ENCODE measurements at regions of chr16 and their contacts with region 1.

Region 1: DNA sequence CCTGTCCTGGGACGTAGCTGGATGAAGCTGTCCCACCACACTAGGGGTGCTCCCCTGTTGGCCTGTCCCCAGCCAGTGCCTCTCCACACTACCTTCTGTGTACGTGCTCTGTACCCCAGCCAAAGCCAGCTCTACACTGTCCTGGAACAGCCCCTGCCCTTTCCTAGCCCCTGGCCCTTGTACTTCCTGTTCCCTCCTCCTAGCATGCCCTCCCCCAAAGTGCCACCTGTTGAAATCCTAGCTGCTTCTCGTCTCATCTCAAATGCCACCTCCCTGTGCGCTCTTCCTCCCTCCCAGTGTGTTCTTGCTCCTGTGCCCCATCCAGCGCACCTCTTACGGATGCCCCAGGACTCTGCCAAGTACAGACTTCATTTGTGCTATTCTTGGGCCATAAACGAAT is 33.5 kb downstream of the IRX3 start:
- DNase-seq: no peak
- ATAC-seq: no peak
- H3K4me3 ChIP-seq: no peak overlapping the region
- H3K4me3 Mint-ChIP-seq: no peak overlapping the region
- H3K27ac ChIP-seq: no peak overlapping the region
- H3K27ac Mint-ChIP-seq: no peak overlapping the region
- H3K4me1 ChIP-seq: no peaks in the 10 kb centered on the region
- H3K4me1 Mint-ChIP-seq: no peaks in the 10 kb centered on the region
- H3K27me3 ChIP-seq: no peaks in the 10 kb centered on the region
- H3K27me3 Mint-ChIP-seq: peaks cover 3% of the 10 kb centered on the region
- CTCF ChIP-seq: no peak

Region 2: DNA sequence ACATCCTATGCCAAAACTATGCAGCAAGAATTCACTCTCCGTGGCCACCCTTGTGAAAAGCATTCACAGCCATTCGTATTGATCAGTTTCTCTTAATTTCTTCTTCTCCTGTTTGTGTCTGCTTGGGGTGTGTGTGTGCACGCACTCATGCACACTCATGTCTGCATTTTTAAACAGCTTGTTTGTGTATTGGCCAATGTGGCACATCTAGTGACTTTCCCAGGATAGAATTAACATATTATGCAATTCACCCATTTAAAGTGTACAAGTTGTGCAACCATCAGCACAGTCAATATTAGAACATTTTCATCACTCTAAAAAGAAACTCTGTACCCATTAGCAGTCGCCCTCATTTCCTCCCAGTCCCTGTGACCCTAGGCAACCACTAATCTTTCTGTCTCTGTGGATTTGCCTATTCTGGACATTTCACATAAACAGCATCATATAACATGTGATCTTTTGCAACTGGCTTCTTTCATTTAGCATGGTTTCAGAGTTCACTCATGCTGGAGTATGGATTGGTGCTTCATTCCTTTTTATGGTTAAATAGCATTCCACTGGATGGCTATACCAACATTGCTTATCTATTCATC is 13.3 kb after region 1 on chr16:
- CTCF ChIA-PET with region 1: no interaction called
- POLR2A ChIA-PET with region 1: no interaction called
- intact Hi-C with region 1: loop called in 1 of 2 experiments (anchors 1 kb)
- DNase-seq: no peak
- ATAC-seq: no peak
- H3K4me3 ChIP-seq: no peak overlapping the region
- H3K4me3 Mint-ChIP-seq: no peak overlapping the region
- H3K27ac ChIP-seq: no peak overlapping the region
- H3K27ac Mint-ChIP-seq: no peak overlapping the region
- H3K4me1 ChIP-seq: no peaks in the 10 kb centered on the region
- H3K4me1 Mint-ChIP-seq: no peaks in the 10 kb centered on the region
- H3K27me3 ChIP-seq: no peaks in the 10 kb centered on the region
- H3K27me3 Mint-ChIP-seq: peaks cover 9% of the 10 kb centered on the region
- CTCF ChIP-seq: no peak

Region 3: GRCh38 chr16:54289945-54290832 is 37.1 kb after region 1 on chr16:
- CTCF ChIA-PET with region 1: no interaction called
- POLR2A ChIA-PET with region 1: no interaction called
- intact Hi-C with region 1: no loop called
- DNase-seq: no peak
- ATAC-seq: no peak
- H3K4me3 ChIP-seq: no peak overlapping the region
- H3K4me3 Mint-ChIP-seq: no peak overlapping the region
- H3K27ac ChIP-seq: no peak overlapping the region
- H3K27ac Mint-ChIP-seq: no peak overlapping the region
- H3K4me1 ChIP-seq: no peaks in the 10 kb centered on the region
- H3K4me1 Mint-ChIP-seq: peaks cover 15% of the 10 kb centered on the region
- H3K27me3 ChIP-seq: peaks cover 6 to 11% of the 10 kb centered on the region in 2 experiments
- H3K27me3 Mint-ChIP-seq: peaks cover 52% of the 10 kb centered on the region
- CTCF ChIP-seq: no peak

Region 4: GRCh38 chr16:54359081-54359954 is 106.2 kb after region 1 on chr16:
- CTCF ChIA-PET with region 1: no interaction called
- POLR2A ChIA-PET with region 1: no interaction called
- intact Hi-C with region 1: no loop called
- DNase-seq: no peak
- ATAC-seq: no peak
- H3K4me3 ChIP-seq: no peak overlapping the region
- H3K4me3 Mint-ChIP-seq: no peak overlapping the region
- H3K27ac ChIP-seq: no peak overlapping the region
- H3K27ac Mint-ChIP-seq: no peak overlapping the region
- H3K4me1 ChIP-seq: no peaks in the 10 kb centered on the region
- H3K4me1 Mint-ChIP-seq: no peaks in the 10 kb centered on the region
- H3K27me3 ChIP-seq: no peaks in the 10 kb centered on the region
- H3K27me3 Mint-ChIP-seq: peaks cover 40% of the 10 kb centered on the region
- CTCF ChIP-seq: no peak